Thyroid gland (tissue), 4 donors: ENCODE measurements at regions of chr14 and their contacts with region 1.

Region 1: DNA sequence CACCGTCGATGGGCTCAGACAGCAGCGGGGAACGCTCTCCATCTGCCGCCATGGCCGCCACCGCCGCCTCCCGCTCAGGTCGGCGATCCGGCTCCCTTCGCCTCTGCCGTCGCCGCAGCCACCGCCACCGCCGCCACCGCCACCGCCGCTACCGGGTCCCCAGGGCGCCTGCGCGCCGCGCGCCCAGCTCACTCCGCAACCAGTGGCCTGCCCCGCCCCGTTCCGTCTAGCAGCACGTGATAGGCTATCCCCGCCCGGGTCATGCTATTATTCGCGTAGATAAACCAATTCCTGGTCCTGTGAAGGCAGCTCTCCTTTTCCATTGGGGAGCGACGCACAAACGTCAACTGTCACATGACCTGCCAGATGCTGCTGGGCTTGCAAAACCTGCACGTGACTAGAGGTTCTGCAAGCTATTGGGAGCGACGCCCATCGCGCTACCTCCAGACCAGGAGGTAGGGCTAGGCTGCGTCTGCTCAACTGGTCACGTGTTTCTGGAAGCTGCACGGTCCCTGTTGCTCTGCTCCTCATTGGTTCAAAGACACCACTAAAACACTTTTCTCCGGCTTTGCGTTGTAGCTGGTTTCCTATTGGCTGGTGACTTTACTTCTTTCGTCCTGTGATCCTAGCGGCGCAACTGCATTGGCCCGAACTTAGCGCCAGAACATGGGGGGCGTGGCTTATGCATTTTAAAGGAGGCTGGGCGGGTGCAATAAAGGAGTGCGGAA is at the start of gene PIP4P1:
- DNase-seq: peak; percentile 99
- H3K4me3 ChIP-seq: peak within 1 kb of the TSS; percentile 73 to 94 (median 80)
- H3K27ac ChIP-seq: peak within 1 kb of the TSS; percentile 83 to 89 (median 86)
- H3K4me1 ChIP-seq: peaks cover 9 to 11% of the 10 kb centered on the region in 2 donors
- H3K27me3 ChIP-seq: no peaks in the 10 kb centered on the region
- CTCF ChIP-seq: peak in 1 of 6 experiments; percentile 9
- POLR2A ChIP-seq: peak; percentile 63 to 82
- total RNA-seq, gene PIP4P1: 15.4 to 29.1 (median 23.1) TPM

Region 2: DNA sequence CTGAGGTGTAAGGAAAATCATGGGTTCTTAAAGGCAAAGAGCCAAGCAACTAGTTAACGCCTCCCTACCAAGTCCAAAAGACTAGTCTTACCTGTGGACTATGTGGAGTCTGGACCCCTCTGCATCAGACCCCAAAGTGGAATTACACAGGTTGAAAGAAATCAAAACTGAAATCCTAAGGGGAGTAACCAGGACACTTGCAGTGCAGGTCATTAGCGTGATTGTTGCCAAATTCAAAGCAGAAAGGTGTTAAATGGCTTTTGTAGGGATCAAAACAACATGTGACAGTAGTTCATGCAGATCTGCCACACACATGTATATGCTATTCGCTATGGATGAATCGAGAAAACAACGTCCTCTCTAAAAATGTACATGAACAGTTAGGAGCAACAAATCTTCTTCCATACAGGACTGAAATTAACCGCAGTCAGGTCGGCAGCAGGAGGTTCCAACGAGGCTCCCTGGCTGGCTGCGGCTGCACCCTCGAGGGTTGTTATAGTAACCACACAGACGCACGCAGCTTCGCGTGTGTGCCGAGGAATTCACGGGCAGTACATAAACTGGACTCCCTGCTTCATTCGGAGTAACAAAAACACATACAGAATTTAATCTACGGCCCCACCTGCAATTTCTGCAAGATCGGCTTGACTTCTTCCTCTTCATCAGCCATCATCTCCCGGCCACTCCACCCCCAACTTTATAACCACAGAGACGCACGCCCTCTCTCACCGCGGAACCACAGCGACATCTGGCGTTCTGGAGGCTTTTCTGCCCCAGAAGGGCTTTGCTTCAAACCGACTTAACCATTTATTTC is 156.0 kb before region 1 on chr14 and contains the start of gene TTC5:
- intact Hi-C with region 1: no loop called
- DNase-seq: peak; percentile 75 to 84
- H3K4me3 ChIP-seq: peak within 1 kb of the TSS; percentile 8 to 51 (median 41)
- H3K27ac ChIP-seq: peak within 1 kb of the TSS in 1 of 3 donors; percentile 53
- H3K4me1 ChIP-seq: peaks cover 6 to 7% of the 10 kb centered on the region in 2 donors
- H3K27me3 ChIP-seq: no peaks in the 10 kb centered on the region
- CTCF ChIP-seq: peak in 5 of 6 experiments; percentile 78 to 93 (median 87)
- POLR2A ChIP-seq: no peak
- total RNA-seq, gene TTC5: 15.9 to 44.2 (median 19.2) TPM

Region 3: GRCh38 chr14:20413045-20413799 is 48.2 kb before region 1 on chr14 and contains the start of gene TEP1:
- intact Hi-C with region 1: loop called (anchors 10 kb)
- DNase-seq: peak; percentile 94 to 95
- H3K4me3 ChIP-seq: peak within 1 kb of the TSS; percentile 59 to 89 (median 76)
- H3K27ac ChIP-seq: peak within 1 kb of the TSS; percentile 93 to 98 (median 94)
- H3K4me1 ChIP-seq: peaks cover 5 to 11% of the 10 kb centered on the region in 2 donors
- H3K27me3 ChIP-seq: no peaks in the 10 kb centered on the region
- CTCF ChIP-seq: peak in 2 of 6 experiments; percentile 23 to 24
- POLR2A ChIP-seq: peak; percentile 17 to 93
- total RNA-seq, gene TEP1: 26.6 to 39.3 (median 29.7) TPM